Activated CD8-positive, alpha-beta T cell treated with anti-CD3 and anti-CD28 coated beads, Interleukin-2, amount 10 ng/mL, durations not matched to agents 7 days and 5 days (primary cell): ENCODE measurements at regions of chr1 and their contacts with region 1.

Region 1: GRCh38 chr1:156421062-156421938 is 52.3 kb downstream of the RHBG start:
- DNase-seq: peak; percentile 78
- ATAC-seq: peak; percentile 73
- H3K4me3 Mint-ChIP-seq: peak overlapping the region; percentile 81
- H3K27ac Mint-ChIP-seq: no peak overlapping the region
- H3K4me1 Mint-ChIP-seq: peaks cover 22% of the 10 kb centered on the region
- H3K27me3 Mint-ChIP-seq: peaks cover 88% of the 10 kb centered on the region

Region 2: DNA sequence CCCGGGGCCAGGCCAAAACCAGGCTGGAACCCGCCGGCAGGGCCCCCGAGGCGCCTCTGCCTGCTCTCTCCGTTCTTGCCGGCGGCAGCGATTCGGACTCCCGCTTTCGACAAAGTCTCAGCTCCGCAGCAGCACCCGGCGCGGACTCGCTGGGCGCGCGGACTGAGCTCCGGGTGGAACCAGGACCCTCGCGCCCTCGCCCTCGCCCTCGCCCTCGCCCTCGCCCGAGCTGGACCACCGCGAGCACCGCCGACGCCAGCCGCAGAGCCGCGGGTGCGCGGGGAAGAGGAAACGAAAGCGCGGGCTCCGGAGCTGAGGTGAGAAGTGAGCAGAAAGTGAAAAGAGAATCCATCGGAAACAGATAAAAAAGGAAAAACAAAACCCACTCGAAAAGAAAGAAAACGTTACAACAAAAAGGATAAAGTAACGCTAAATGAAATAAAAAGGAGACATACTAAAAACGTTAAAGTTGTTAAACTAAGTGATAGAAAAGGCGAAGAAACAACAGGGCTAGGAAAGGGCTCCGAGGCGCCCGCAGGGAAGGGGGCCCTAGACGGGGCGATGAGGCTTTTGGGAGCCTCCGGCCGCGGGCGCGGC is 14.3 kb after region 1 on chr1:
- CTCF ChIA-PET with region 1: interaction called, 14 read pairs
- POLR2A ChIA-PET with region 1: no interaction called
- DNase-seq: no peak
- ATAC-seq: peak; percentile 36
- H3K4me3 Mint-ChIP-seq: peak overlapping the region; percentile 66
- H3K27ac Mint-ChIP-seq: no peak overlapping the region
- H3K4me1 Mint-ChIP-seq: peaks cover 24% of the 10 kb centered on the region
- H3K27me3 Mint-ChIP-seq: peaks cover 87% of the 10 kb centered on the region